ENCODE measurements at regions of chr17 and their contacts with region 1.

Region 1: DNA sequence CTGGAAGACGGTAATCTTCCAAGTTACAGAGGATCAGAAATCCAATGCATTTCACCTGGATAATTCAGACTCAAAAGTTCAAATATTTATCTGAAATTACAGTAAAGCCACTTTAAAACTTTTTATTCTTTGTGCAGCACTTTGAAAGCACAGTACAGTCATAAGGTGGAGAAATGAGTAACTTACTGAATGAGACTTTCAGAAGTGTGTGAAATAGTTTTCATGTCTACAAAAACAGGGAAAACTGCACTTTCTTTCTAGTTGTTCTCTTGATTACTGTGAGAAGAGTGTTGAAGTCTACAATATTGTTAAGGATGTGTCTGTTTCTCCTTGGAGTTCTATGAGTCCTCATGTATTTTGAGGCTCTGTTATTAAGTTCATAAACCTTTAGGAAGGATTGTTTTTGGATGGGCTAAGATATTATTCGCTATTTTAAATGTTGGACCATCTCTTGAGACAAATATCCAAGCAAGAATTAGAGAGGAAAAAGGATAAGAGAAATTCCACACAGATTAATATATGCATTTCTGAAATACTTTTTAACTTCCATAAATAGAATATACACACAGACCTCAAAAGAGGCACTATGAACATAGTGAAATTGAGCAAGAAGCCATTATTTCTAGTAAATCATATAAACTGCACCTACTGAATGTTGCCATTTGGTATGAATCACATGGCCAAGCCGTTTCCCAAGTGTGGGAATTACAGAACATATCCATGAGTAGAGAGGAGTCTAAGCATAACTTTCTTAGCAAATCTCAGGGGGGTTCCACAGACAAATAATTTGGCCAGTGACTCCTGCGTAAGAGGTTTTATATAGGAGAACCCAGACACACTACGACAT is 83.6 kb upstream of the PLEKHM1 start:
- DNase-seq: no peak
- ATAC-seq: no peak
- H3K4me3 ChIP-seq: no peak overlapping the region
- H3K27ac ChIP-seq: no peak overlapping the region
- H3K4me1 ChIP-seq: peaks cover 9% of the 10 kb centered on the region
- H3K27me3 ChIP-seq: peaks cover 0 to 2% (median 0%) of the 10 kb centered on the region in 3 donors
- CTCF ChIP-seq: no peak

Region 2: GRCh38 chr17:46115699-46116098 is 541.6 kb after region 1 on chr17:
- intact Hi-C with region 1: loop called in 1 of 2 experiments (anchors 10 kb)
- DNase-seq: no peak
- ATAC-seq: peak; percentile 37 to 58 (median 54)
- H3K4me3 ChIP-seq: no peak overlapping the region
- H3K27ac ChIP-seq: peak overlapping the region; percentile 39
- H3K4me1 ChIP-seq: peaks cover 66% of the 10 kb centered on the region
- H3K27me3 ChIP-seq: no peaks in the 10 kb centered on the region
- CTCF ChIP-seq: no peak

Region 3: GRCh38 chr17:46270032-46270431 is 695.9 kb after region 1 on chr17:
- intact Hi-C with region 1: loop called in 1 of 2 experiments (anchors 10 kb)
- DNase-seq: no peak
- ATAC-seq: no peak
- H3K4me3 ChIP-seq: no peak overlapping the region
- H3K27ac ChIP-seq: no peak overlapping the region
- H3K4me1 ChIP-seq: peaks cover 8% of the 10 kb centered on the region
- H3K27me3 ChIP-seq: no peaks in the 10 kb centered on the region
- CTCF ChIP-seq: no peak

Measured in psoas muscle (tissue), 8 donors.